Mammary epithelial cell (primary cell): ENCODE measurements at regions of chr2 and their contacts with region 1.

Region 1: GRCh38 chr2:23636426-23636825 is 251.4 kb downstream of the KLHL29 start:
- DNase-seq: no peak
- H3K4me3 ChIP-seq: no peak overlapping the region
- H3K27ac ChIP-seq: no peak overlapping the region
- H3K4me1 ChIP-seq: no peaks in the 10 kb centered on the region
- H3K27me3 ChIP-seq: no peaks in the 10 kb centered on the region
- CTCF ChIP-seq: peak in 1 of 2 donors; percentile 54

Region 2: DNA sequence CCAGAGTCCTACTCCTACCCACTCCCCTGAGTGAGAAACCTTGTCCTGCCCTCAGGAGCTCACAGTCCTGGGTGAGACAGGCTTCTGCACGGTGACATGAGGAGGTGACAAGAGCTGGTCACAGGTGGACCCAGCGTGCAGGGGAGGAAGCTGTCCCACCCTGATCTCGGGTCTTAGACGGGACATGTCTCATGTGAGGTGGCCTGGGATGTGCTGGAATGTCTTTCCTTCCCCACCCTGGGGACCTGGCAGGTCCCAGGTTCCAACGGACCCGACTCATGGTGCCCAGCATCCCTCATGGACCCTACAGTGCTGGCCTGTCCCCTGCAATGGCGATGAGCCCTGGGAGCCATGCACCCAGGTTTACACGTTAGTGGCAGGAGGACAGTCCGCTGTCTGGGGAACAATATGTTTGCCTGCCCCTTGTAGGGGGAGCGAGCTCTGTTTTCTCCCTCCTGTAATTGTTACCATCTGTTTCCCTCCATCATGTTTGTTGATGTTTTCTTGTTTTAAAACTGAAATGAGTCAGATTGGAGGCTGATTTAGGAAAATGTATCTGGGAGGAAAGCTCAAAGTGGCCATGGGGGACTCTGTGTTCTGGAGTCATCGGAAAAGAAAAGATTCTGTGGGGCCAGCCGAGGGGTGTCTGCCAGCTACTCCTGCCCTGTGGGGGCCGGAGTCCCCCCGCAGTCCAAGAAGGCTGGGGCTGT is 13.3 kb before region 1 on chr2:
- CTCF ChIA-PET with region 1: no interaction called
- dilution Hi-C with region 1: no loop called
- in situ Hi-C with region 1: no loop called
- intact Hi-C with region 1: loop called (anchors 2 kb)
- DNase-seq: no peak
- H3K4me3 ChIP-seq: no peak overlapping the region
- H3K27ac ChIP-seq: no peak overlapping the region
- H3K4me1 ChIP-seq: no peaks in the 10 kb centered on the region
- H3K27me3 ChIP-seq: no peaks in the 10 kb centered on the region
- CTCF ChIP-seq: no peak

Region 3: DNA sequence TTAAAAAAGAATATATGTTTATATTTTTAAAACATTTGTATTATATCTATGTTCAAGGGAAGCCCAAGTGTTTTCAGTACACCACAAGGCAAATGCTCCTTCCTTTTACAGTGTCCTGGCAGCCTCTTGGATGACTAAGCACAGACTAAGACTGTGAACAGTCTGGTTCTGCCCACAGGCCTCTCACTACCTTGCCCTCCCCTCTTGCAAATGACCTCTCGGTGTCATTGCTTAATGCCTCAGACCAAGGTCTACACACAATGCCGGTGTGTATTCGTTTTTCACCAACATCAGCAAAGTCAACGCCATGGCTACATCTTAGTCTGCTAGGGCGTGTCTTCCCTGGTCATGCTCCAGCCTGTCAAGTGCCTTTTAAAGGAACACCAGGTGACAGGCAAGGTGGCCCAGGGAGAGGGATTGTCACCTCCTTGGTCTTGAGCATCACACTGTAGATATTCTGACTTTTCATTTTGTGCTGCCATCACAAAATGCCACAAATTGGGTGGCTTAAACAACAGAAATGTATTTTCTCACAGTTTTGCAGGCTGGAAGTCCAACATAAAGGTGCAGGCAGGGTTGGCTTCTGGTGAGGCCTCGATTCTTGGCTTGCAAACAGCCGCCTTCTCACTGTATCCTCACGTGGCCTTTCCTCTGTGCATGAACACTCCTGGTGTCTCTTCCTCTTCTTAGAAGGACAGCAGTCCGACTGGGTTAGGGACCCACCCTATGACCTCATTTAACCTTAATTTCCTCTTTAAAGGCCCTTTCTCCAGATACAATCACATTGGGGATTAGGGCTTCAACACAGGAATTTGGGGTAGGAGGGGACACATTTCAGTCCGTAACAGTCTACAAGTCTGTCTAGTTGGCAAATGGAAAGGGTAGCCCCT is 15.0 kb after region 1 on chr2:
- CTCF ChIA-PET with region 1: no interaction called
- dilution Hi-C with region 1: no loop called
- in situ Hi-C with region 1: no loop called
- intact Hi-C with region 1: no loop called
- DNase-seq: peak; percentile 91
- H3K4me3 ChIP-seq: no peak overlapping the region
- H3K27ac ChIP-seq: no peak overlapping the region
- H3K4me1 ChIP-seq: peaks cover 37% of the 10 kb centered on the region
- H3K27me3 ChIP-seq: no peaks in the 10 kb centered on the region
- CTCF ChIP-seq: no peak

Region 4: GRCh38 chr2:23692851-23693605 is 56.6 kb after region 1 on chr2:
- CTCF ChIA-PET with region 1: no interaction called
- dilution Hi-C with region 1: no loop called
- in situ Hi-C with region 1: no loop called
- intact Hi-C with region 1: no loop called
- DNase-seq: no peak
- H3K4me3 ChIP-seq: no peak overlapping the region
- H3K27ac ChIP-seq: no peak overlapping the region
- H3K4me1 ChIP-seq: no peaks in the 10 kb centered on the region
- H3K27me3 ChIP-seq: no peaks in the 10 kb centered on the region
- CTCF ChIP-seq: no peak

Region 5: DNA sequence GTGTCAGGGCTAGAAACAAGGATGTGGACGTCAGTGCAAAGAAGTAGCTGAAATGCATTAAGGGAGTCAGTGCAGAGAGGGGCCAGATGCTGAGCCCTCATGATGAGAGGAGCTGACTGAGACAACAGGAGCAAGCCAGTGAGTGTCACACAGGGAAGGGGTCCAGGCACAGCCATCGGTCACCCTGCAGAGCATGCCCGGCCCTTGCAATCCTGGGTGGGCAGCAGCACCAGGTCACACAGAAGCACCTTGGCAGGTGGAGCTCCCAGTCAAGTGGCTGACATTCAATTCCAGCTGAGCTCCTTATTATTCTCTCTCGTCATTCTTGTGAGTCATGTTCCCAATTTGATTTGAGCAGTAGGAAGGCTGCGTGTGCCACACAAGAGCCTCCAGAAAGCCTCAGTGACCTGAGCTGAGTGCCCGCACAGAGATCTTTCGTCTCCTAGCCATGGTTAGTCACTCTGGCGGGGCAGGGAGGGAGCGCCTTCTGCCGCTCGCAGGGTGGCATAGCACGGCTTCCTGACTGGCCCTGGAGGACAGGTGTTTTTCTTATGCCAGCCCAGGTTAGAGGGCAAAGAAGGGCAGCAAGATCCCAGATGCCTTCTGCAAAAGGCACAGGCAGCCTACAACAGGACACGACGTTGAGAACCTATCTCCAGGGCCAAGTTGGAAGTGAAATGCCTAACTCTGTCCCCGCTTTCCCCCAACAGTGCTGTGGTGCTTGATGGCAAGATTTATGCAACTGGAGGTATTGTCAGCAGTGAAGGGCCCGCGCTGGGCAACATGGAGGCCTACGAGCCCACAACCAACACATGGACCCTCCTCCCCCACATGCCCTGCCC is 69.6 kb after region 1 on chr2:
- CTCF ChIA-PET with region 1: no interaction called
- dilution Hi-C with region 1: loop called (anchors 5 kb)
- in situ Hi-C with region 1: no loop called
- intact Hi-C with region 1: no loop called
- DNase-seq: no peak
- H3K4me3 ChIP-seq: no peak overlapping the region
- H3K27ac ChIP-seq: no peak overlapping the region
- H3K4me1 ChIP-seq: no peaks in the 10 kb centered on the region
- H3K27me3 ChIP-seq: no peaks in the 10 kb centered on the region
- CTCF ChIP-seq: no peak